ENCODE measurements at regions of chr12 and their contacts with region 1.

Region 1: GRCh38 chr12:48765753-48766162 is 23.1 kb downstream of the ADCY6 start:
- DNase-seq: no peak
- ATAC-seq: no peak
- H3K4me3 ChIP-seq: no peak overlapping the region
- H3K27ac ChIP-seq: no peak overlapping the region
- H3K4me1 ChIP-seq: no peaks in the 10 kb centered on the region
- H3K27me3 ChIP-seq: no peaks in the 10 kb centered on the region
- CTCF ChIP-seq: no peak

Region 2: GRCh38 chr12:48567731-48568130 is 198.0 kb before region 1 on chr12:
- CTCF ChIA-PET with region 1: no interaction called
- POLR2A ChIA-PET with region 1: no interaction called
- in situ Hi-C with region 1: no loop called
- intact Hi-C with region 1: no loop called
- DNase-seq: no peak
- ATAC-seq: no peak
- H3K4me3 ChIP-seq: no peak overlapping the region
- H3K27ac ChIP-seq: no peak overlapping the region
- H3K4me1 ChIP-seq: no peaks in the 10 kb centered on the region
- H3K27me3 ChIP-seq: peaks cover 9% of the 10 kb centered on the region; the same call in 1 of the 2 replicates
- CTCF ChIP-seq: no peak

Region 3: DNA sequence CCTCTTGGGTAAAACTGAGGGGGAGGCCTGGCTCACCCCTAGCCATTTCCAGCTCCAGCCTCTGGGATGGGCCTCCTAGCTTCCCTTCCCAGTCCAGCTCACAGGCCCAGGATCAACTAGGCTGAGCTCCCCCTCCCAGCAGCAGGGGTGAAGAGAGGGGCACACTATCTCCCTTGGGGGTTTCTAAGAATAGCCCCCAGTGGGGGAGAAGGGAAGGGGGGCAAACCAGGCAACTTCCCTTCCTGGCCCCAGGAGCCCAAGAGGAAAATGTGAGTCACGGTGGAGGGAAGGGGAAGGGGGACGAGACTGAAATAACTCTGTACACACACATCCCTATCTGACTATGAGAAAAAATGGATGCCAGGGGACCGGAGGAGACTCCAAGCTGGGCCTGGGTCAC is 14.1 kb after region 1 on chr12:
- CTCF ChIA-PET with region 1: no interaction called
- POLR2A ChIA-PET with region 1: interaction called, 10 read pairs
- in situ Hi-C with region 1: no loop called
- intact Hi-C with region 1: no loop called
- DNase-seq: no peak
- ATAC-seq: no peak
- H3K4me3 ChIP-seq: no peak overlapping the region
- H3K27ac ChIP-seq: no peak overlapping the region
- H3K4me1 ChIP-seq: no peaks in the 10 kb centered on the region
- H3K27me3 ChIP-seq: no peaks in the 10 kb centered on the region
- CTCF ChIP-seq: no peak

Region 4: DNA sequence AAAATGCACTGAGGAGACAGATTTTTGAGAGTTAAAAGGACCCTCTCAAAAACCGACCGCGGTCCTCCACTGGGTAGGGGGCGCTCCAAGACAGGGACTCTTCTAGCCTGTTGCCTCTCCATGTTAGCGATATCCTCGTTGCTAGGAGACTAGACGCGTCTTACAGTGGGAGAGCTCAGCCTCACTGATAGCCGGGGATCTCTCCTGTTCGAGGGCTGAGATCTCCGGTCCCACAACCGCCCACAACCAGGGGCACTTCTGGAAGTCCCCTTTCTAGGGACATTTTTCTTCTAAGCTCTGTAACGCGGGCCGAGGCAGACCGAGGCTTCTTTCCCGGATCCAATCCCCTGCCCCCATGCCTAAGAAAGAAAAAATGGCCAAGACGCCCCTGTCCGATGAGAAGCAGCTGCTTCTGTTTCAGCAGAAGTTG is 138.2 kb after region 1 on chr12:
- CTCF ChIA-PET with region 1: interaction called, 10 read pairs
- POLR2A ChIA-PET with region 1: no interaction called
- in situ Hi-C with region 1: no loop called
- intact Hi-C with region 1: no loop called
- DNase-seq: no peak
- ATAC-seq: peak; percentile 92
- H3K4me3 ChIP-seq: peak overlapping the region; percentile 44 to 68
- H3K27ac ChIP-seq: no peak overlapping the region
- H3K4me1 ChIP-seq: no peaks in the 10 kb centered on the region
- H3K27me3 ChIP-seq: no peaks in the 10 kb centered on the region
- CTCF ChIP-seq: peak; percentile 81

Measured in Panc1 (cell line).